Right ventricle myocardium inferior (tissue), 1 donor: ENCODE measurements at regions of chr12 and their contacts with region 1.

Region 1: GRCh38 chr12:82685790-82686167 is 927 bp upstream of the TMTC2 start:
- DNase-seq: peak; percentile 97
- ATAC-seq: peak; percentile 90

Region 2: GRCh38 chr12:82758749-82759330 is 73.1 kb after region 1 on chr12:
- intact Hi-C with region 1: no loop called
- DNase-seq: no peak
- ATAC-seq: no peak

Region 3: DNA sequence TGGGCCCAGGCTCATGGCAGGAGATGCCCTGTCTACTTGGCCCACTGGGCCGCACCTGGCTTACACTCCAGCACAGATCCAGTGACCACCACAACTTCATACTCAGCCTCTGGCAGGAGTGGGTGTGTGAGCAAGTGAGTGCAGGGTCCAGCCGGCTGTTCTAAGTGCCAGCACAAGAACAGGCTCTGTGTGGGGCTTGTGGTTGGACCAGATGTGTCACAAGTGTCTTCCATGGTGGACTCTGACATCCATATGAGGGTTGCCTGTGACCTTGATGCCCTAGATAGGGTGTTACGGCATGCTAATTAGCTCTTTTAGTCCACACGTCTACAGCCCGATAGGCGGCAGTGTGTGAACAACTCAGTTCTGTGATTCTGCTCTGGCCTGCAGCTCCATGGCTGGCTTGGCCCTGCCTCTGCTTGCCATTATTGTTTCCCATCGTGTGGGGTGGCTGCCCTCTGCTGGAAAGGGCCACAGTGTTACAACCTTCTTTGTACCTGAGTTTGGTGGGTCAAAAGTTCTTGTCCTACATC is 1137.7 kb after region 1 on chr12:
- intact Hi-C with region 1: loop called (anchors 2 kb)
- DNase-seq: peak; percentile 53
- ATAC-seq: peak; percentile 63

Region 4: GRCh38 chr12:84397263-84397662 is 1711.5 kb after region 1 on chr12:
- intact Hi-C with region 1: loop called (anchors 10 kb)
- DNase-seq: no peak
- ATAC-seq: no peak